Heart right ventricle (tissue), 16 donors: ENCODE measurements at regions of chr13 and their contacts with region 1.

Region 1: DNA sequence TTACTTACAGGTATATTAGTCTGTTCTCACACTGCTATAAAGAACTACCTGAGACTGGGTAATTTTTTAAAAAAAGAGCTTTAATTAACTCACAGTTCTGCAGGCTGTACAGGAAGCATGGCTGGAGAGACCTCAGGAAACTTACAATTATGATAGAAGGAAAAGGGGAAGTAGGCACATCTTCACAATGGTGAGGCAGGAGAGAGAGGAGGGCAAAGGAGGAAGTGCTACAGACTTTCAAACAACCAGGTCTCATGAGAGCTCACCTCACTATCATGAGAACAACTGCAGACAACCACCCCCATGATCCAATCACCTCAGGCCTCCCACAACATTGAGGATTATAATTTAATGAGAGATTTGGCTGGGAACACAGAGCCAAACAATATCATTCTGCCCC is 511.7 kb downstream of the SLITRK6 start:
- DNase-seq: no peak
- ATAC-seq: no peak
- H3K4me3 ChIP-seq: no peak overlapping the region
- H3K27ac ChIP-seq: no peak overlapping the region
- H3K4me1 ChIP-seq: no peaks in the 10 kb centered on the region
- H3K27me3 ChIP-seq: no peaks in the 10 kb centered on the region
- CTCF ChIP-seq: no peak

Region 2: DNA sequence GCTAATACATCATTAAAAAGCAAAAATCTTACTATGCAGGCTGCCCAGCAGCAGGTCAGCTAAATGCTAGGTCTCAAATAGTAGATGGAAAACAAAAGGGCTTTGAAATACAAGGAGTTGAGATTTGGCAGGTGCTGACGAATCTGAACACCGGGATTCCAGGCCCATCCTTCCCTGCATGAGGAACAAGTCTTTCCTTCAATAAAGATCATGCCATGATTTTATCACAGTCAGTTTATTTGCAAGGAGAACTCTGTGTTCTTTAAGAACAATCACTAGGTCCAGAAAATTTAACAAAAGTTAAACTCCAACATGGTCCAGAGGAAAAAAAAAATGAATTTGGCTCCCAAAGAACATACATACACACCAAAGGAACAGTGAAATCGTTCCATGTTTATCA is 39.7 kb before region 1 on chr13:
- intact Hi-C with region 1: loop called in 1 of 10 experiments (anchors 1 kb)
- DNase-seq: no peak
- ATAC-seq: no peak
- H3K4me3 ChIP-seq: no peak overlapping the region
- H3K27ac ChIP-seq: no peak overlapping the region
- H3K4me1 ChIP-seq: no peaks in the 10 kb centered on the region
- H3K27me3 ChIP-seq: no peaks in the 10 kb centered on the region
- CTCF ChIP-seq: no peak